ENCODE measurements at regions of chr6 and their contacts with region 1.

Region 1: GRCh38 chr6:145569140-145569539 is 166.2 kb downstream of the EPM2A start:
- DNase-seq: no peak

Region 2: DNA sequence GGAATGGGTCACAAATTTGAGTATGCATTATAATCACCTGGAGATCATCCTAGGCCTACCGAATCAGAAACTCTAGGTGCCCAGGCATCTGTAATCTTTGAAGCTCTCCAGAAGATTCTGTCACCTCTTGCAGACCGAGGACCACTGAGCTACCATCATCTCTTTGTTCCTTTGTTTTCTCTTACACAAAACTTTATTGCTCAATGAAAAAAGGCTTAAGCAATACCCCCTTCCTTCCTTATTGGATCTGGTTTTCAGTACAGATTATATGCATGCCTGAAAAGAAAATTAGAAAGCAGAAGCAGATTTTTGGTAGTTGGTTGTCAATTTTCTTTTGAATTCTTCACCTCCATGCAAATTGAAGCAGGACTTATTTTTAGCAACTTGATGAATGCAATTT is 1387.5 kb before region 1 on chr6:
- intact Hi-C with region 1: no loop called
- DNase-seq: no peak

Region 3: DNA sequence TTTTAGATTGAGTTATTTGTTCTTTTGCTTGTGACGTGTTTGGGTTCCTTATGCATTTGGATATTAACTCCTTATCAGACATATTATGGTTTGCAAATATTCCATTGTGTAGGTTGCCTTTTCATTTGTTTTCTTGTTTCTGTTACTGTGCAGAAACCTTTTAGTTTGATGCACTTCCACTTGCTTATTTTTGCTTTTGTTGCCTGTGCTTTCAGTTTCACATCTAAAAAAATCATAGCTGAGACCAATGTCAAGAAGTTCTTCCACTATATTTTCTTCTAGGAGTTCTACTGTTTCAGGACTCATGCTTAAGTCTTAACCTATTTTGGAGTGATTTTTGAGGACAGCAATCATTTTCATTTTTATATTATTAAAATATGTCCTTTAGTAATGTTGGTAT is 52.6 kb after region 1 on chr6:
- intact Hi-C with region 1: no loop called
- DNase-seq: no peak

Region 4: DNA sequence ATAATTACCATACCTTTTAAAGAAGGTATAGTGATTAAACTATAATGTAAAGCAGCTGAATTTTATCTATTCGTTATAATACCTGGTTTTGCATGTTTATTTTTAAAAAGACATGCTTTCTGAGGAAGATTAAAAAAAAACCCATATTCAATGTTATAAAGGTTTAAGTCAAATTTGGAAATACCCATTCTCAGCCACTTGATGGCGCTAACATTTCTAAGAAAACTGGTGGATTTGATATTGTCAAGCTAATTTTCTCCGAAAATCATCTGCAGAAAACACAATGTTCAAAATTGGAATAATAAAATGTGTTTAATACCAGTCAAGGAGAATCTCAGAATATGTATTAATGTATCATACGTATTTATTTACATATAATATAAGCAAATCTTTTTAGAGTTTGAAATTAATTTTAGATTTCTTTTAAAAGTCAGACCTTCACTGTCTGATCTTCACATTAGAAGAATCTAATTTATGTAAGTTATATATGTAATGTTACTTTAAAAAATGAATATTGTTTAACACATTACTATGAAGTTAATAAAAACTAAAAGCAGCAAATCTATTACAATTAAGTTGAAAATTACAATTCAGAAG is 360.0 kb after region 1 on chr6:
- intact Hi-C with region 1: loop called in 1 of 2 experiments (anchors 5 kb)
- DNase-seq: no peak

Measured in posterior vena cava (tissue), 2 donors.